ENCODE measurements at regions of chr22 and their contacts with region 1.

Region 1: DNA sequence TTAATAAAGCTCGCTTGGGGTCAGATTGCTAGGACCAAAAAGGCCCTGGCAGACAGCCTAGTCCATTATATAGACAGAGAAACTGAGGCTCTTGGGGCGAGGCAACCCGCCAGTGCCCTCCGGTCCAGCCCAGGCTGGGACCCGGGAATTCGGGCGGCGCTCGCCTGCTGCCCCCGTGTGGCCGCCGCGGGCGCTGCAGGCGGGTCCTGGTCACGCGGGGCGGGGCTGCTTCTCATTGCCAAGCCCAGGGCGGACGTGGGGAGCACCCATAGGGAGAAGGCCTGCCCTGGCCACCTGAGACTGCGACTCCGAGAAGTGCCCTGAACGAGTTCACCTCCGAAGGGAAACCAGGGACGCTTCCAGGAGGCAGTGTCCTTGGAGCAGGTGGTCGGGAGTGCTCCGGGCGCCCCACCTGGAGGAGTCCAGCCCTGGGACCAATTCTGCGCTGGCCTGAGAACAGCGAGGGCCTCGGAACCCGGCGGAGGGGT is 36.0 kb upstream of the CSNK1E start:
- DNase-seq: peak; percentile 48
- H3K4me3 ChIP-seq: no peak overlapping the region
- H3K27ac ChIP-seq: no peak overlapping the region
- H3K4me1 ChIP-seq: no peaks in the 10 kb centered on the region
- H3K27me3 ChIP-seq: no peaks in the 10 kb centered on the region
- CTCF ChIP-seq: peak; percentile 93 to 99
- POLR2A ChIP-seq: no peak

Region 2: DNA sequence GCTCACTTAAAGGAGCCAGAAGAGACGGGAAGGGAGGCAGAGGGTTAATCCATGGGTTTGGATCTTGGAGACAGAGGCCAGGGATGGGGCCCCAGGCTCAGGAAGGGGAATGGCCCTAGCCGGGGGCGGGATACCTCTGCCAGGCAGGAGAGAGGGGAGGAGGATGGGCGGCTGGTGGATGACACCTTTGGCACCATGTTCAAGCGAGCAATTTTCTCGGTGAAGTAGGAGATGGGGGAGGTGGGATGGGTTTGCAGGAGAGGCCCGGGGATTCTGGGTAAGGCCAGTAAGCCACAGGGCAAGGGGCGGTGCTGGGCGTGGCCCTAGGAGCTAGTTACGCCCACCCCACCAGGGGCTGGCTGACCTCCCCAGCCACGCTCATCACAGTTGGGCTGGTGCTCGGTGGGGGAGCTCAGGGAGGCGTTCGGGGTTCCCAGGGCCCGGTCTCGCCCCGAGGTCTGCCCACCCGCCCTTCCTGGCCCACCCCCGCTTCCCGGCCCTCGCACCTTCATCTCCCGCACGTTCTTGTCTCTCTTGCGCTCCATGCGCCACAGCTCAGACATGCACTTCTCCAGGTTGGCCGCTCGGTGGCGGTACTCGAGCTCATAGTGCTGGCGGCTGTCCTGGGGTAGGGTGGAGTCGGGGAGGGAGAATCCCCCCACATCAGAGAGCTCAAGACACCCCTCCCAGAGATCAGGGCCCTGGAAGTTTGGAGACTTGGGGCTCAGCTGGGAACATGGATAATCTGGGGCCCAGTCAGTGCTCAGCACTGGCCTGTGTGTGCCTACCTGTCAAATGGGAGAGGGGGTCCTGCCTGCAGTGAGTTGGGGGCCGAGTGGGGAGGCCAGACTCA is 255.4 kb before region 1 on chr22:
- CTCF ChIA-PET with region 1: no interaction called
- POLR2A ChIA-PET with region 1: no interaction called
- dilution Hi-C with region 1: no loop called
- intact Hi-C with region 1: no loop called
- DNase-seq: peak; percentile 12
- H3K4me3 ChIP-seq: no peak overlapping the region
- H3K27ac ChIP-seq: no peak overlapping the region
- H3K4me1 ChIP-seq: peaks cover 10% of the 10 kb centered on the region
- H3K27me3 ChIP-seq: peaks cover 0 to 3% of the 10 kb centered on the region in 2 experiments
- CTCF ChIP-seq: peak; percentile 36 to 60
- POLR2A ChIP-seq: no peak

Region 3: GRCh38 chr22:38262051-38262795 is 91.0 kb before region 1 on chr22:
- CTCF ChIA-PET with region 1: no interaction called
- POLR2A ChIA-PET with region 1: no interaction called
- dilution Hi-C with region 1: no loop called
- intact Hi-C with region 1: loop called (anchors 1 kb)
- DNase-seq: peak; percentile 29
- H3K4me3 ChIP-seq: no peak overlapping the region
- H3K27ac ChIP-seq: no peak overlapping the region
- H3K4me1 ChIP-seq: peaks cover 21% of the 10 kb centered on the region
- H3K27me3 ChIP-seq: no peaks in the 10 kb centered on the region
- CTCF ChIP-seq: peak; percentile 52 to 71
- POLR2A ChIP-seq: no peak

Region 4: DNA sequence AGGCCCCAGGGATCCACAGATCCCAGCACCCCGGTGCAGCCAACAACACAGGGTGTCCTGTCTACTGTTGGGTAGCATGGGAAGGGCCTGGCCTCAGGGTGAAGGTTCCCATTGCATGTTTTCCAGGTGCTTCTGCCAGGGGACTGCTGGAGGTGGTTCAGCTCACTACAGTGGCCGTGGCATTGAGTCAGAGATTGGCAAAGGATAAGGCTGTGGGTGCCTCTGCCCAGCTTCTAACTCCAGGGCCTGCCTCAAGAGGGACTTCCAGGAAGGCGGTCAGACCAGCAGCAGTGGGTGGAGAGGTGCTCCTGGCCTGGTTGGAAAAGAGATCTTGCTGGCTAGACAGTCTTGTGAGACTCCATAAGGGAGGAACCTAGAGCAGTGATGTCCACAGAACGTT is 56.8 kb before region 1 on chr22:
- CTCF ChIA-PET with region 1: interaction called, 3 read pairs
- POLR2A ChIA-PET with region 1: no interaction called
- dilution Hi-C with region 1: no loop called
- intact Hi-C with region 1: loop called (anchors 1 kb)
- DNase-seq: no peak
- H3K4me3 ChIP-seq: no peak overlapping the region
- H3K27ac ChIP-seq: no peak overlapping the region
- H3K4me1 ChIP-seq: no peaks in the 10 kb centered on the region
- H3K27me3 ChIP-seq: no peaks in the 10 kb centered on the region
- CTCF ChIP-seq: no peak
- POLR2A ChIP-seq: no peak

Region 5: GRCh38 chr22:38656256-38657044 is 303.3 kb after region 1 on chr22 and contains the starts of genes CBY1 and FAM227A:
- CTCF ChIA-PET with region 1: no interaction called
- POLR2A ChIA-PET with region 1: no interaction called
- dilution Hi-C with region 1: no loop called
- intact Hi-C with region 1: no loop called
- DNase-seq: peak; percentile 87
- H3K4me3 ChIP-seq: peak within 1 kb of the TSS; percentile 31 to 94 (median 82)
- H3K27ac ChIP-seq: peak within 1 kb of the TSS; percentile 96
- H3K4me1 ChIP-seq: peaks cover 11% of the 10 kb centered on the region
- H3K27me3 ChIP-seq: no peaks in the 10 kb centered on the region
- CTCF ChIP-seq: no peak
- POLR2A ChIP-seq: peak; percentile 18
- total RNA-seq, gene CBY1: 34.4 and 37.0 TPM in 2 replicates
- total RNA-seq, gene FAM227A: 1.4 and 1.9 TPM in 2 replicates